Activated CD4-positive, alpha-beta T cell treated with anti-CD3 and anti-CD28 coated beads, Interleukin-2, amount 10 ng/mL, durations not matched to agents 7 days and 5 days (primary cell): ENCODE measurements at regions of chr2 and their contacts with region 1.

Region 1: GRCh38 chr2:27050281-27050995 is 1.0 kb upstream of the AGBL5 start:
- DNase-seq: peak; percentile 91
- H3K4me3 Mint-ChIP-seq: peak overlapping the region; percentile 96
- H3K27ac Mint-ChIP-seq: peak overlapping the region; percentile 98
- H3K4me1 Mint-ChIP-seq: peaks cover 23% of the 10 kb centered on the region
- H3K27me3 Mint-ChIP-seq: peaks cover 5% of the 10 kb centered on the region

Region 2: DNA sequence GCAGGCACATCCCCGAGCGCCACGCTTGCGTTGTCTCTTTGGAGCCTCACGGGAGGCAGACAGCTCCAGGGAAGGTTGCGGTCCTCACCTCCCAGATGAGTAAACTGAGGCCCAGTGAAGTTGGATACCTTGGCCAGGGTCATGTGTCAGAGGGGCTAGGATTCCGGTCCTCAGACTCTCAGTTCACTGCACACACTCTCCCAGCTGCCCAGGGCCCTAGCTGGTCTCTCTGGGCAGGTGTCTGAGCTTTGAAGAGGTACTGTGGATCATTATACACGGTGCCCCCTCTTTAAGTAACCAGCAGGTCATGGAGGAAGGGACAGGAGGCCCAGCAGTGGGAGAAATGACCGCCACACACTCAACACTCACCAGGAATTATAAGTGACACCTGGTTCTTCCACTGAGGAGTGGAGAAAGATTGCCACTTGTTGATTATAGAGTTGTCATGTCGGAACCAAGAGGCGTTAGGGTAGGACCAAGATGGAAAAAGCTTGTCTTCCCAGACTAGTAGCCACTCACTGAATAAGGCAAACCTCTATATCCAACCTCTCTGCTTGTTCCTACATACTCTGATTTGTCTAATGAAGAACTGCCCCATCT is 17.1 kb before region 1 on chr2:
- CTCF ChIA-PET with region 1: interaction called, 29 read pairs
- POLR2A ChIA-PET with region 1: interaction called, 4 read pairs
- DNase-seq: no peak
- H3K4me3 Mint-ChIP-seq: peak overlapping the region; percentile 91
- H3K27ac Mint-ChIP-seq: peak overlapping the region; percentile 90
- H3K4me1 Mint-ChIP-seq: peaks cover 52% of the 10 kb centered on the region
- H3K27me3 Mint-ChIP-seq: no peaks in the 10 kb centered on the region

Region 3: GRCh38 chr2:27040282-27040681 is 10.2 kb before region 1 on chr2:
- CTCF ChIA-PET with region 1: interaction called, 29 read pairs
- POLR2A ChIA-PET with region 1: interaction called, 3 read pairs
- DNase-seq: no peak
- H3K4me3 Mint-ChIP-seq: no peak overlapping the region
- H3K27ac Mint-ChIP-seq: no peak overlapping the region
- H3K4me1 Mint-ChIP-seq: peaks cover 9% of the 10 kb centered on the region
- H3K27me3 Mint-ChIP-seq: no peaks in the 10 kb centered on the region

Region 4: DNA sequence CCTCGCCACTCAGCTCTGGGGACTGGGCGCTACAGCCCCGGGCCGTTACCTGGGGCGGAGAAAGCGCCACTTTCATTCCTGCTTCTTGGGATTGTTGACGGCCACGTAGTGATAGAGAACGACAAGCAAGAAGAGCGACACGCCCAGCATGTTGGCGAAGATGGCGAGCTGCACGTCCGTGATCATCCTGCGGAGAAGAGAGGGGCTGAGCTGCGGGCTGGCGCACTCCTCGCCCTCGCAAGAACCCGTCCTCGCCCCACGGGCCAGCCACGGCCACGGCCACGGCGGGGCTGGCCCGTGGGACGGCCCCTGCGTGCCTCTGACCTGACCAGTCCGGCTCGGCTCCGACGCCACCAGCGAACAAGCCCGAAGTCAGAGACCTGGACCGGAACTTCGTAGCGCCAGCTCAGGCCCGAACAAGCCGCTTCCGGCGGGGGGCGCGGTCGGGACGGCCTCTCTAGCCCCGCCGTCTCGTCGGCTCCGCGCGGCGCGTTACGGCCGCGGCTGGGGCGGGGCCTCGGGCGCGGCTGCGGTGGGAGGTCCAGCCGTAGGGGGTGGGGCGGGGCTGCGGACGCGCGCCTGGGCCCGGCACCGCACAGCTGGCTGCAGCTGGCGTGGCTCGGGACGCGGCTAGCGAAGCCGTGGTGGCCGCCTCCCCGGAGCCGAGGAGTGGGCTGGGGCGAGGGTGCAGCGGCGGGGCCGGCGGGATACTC is 21.0 kb after region 1 on chr2 and contains the start of gene OST4:
- CTCF ChIA-PET with region 1: interaction called, 11 read pairs
- POLR2A ChIA-PET with region 1: interaction called, 6 read pairs
- DNase-seq: peak; percentile 91
- H3K4me3 Mint-ChIP-seq: peak within 1 kb of the TSS; percentile 97
- H3K27ac Mint-ChIP-seq: peak within 1 kb of the TSS; percentile 96
- H3K4me1 Mint-ChIP-seq: peaks cover 62% of the 10 kb centered on the region
- H3K27me3 Mint-ChIP-seq: no peaks in the 10 kb centered on the region
- total RNA-seq, gene OST4: 309 to 386 TPM

Region 5: DNA sequence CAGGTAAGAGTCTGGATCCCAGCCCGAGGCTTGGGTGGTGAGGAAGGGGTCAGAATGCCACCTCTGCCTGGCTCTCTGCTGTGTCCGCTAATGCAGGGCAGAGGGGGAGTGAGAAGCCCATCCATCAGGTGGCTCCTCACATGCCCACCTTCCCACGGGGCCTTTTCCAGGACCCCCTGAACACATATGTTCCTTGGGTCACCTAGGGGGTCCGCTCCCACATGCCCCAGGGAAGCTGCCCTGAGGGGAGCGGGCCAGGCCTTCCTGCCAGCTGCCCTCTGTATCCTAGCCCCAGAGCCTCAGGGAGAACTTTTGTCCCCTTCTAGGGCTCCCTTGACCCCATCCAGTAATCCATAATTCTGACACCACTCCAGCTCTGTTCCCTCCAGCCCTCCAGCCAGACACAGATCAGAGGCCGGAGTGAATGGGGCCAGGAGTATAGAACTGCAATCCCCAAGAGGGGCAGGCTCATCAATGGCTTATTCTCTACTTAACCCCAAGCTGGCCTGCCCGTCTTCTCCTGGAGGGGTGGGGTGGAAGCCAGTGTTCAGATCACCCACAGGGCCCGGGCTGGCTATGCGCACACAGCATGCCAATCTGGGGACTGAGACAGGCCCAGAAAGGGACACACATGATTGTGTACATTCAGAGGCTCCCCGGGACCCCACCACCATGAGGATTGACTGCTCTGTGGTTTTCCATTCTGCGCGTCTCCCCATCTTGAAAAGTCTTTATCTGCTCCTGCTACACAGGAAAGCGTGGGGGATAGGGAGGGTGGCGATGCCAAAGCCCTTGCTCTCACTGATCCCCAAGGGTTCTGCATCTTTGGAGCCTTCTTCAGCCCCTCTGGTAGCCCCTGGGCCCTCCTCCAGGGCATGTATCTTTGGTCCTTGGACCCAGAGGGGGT is 29.0 kb after region 1 on chr2:
- CTCF ChIA-PET with region 1: interaction called, 21 read pairs
- POLR2A ChIA-PET with region 1: interaction called, 4 read pairs
- DNase-seq: no peak
- H3K4me3 Mint-ChIP-seq: no peak overlapping the region
- H3K27ac Mint-ChIP-seq: no peak overlapping the region
- H3K4me1 Mint-ChIP-seq: peaks cover 55% of the 10 kb centered on the region
- H3K27me3 Mint-ChIP-seq: peaks cover 2% of the 10 kb centered on the region

Region 6: GRCh38 chr2:27086090-27086723 is 35.8 kb after region 1 on chr2:
- CTCF ChIA-PET with region 1: interaction called, 21 read pairs
- POLR2A ChIA-PET with region 1: interaction called, 4 read pairs
- DNase-seq: peak; percentile 95
- H3K4me3 Mint-ChIP-seq: peak overlapping the region; percentile 79
- H3K27ac Mint-ChIP-seq: peak overlapping the region; percentile 90
- H3K4me1 Mint-ChIP-seq: peaks cover 46% of the 10 kb centered on the region
- H3K27me3 Mint-ChIP-seq: no peaks in the 10 kb centered on the region

Region 7: GRCh38 chr2:27303093-27304025 is 252.9 kb after region 1 on chr2:
- CTCF ChIA-PET with region 1: no interaction called
- POLR2A ChIA-PET with region 1: no interaction called
- DNase-seq: peak; percentile 71
- H3K4me3 Mint-ChIP-seq: peak overlapping the region; percentile 64
- H3K27ac Mint-ChIP-seq: peak overlapping the region; percentile 54
- H3K4me1 Mint-ChIP-seq: peaks cover 10% of the 10 kb centered on the region
- H3K27me3 Mint-ChIP-seq: peaks cover 20% of the 10 kb centered on the region